Colonic mucosa (tissue), 4 donors: ENCODE measurements at regions of chr15 and their contacts with region 1.

Region 1: GRCh38 chr15:88610701-88611231 is 10.4 kb upstream of the AEN start:
- DNase-seq: no peak
- H3K4me3 ChIP-seq: no peak overlapping the region
- H3K27ac ChIP-seq: no peak overlapping the region
- H3K4me1 ChIP-seq: no peaks in the 10 kb centered on the region
- H3K27me3 ChIP-seq: peaks cover 19% of the 10 kb centered on the region
- CTCF ChIP-seq: no peak

Region 2: GRCh38 chr15:88467073-88467934 is 143.5 kb before region 1 on chr15 and contains the starts of genes MRPL46 and MRPS11:
- intact Hi-C with region 1: loop called (anchors 5 kb)
- DNase-seq: peak; percentile 96
- H3K4me3 ChIP-seq: peak within 1 kb of the TSS; percentile 91
- H3K27ac ChIP-seq: peak within 1 kb of the TSS; percentile 72
- H3K4me1 ChIP-seq: peaks cover 7% of the 10 kb centered on the region
- H3K27me3 ChIP-seq: no peaks in the 10 kb centered on the region
- CTCF ChIP-seq: no peak
- total RNA-seq, gene MRPL46: 20.6 to 40.6 TPM
- total RNA-seq, gene MRPS11: 45.7 to 73.6 TPM

Region 3: DNA sequence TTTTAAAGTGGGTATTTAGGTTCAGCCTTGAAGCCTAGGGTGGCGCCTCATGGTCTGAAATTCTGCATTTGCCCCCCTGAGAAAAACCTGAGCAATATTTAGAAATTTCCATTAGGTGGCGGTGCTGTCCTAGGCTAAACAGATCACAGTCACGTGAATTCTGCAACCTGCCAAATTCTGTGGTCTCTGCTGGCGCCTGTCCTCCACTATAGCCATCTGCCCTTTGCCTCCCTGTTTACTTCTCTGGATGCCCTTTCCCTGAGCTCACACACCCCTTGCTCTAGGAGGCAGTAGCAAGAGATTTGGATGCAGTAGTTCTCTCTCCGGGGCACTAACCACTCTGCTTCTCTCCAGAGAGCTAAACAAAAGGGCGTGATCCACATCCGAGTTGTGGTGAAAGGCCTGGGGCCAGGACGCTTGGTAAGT is 134.1 kb before region 1 on chr15:
- intact Hi-C with region 1: loop called (anchors 5 kb)
- DNase-seq: peak; percentile 23
- H3K4me3 ChIP-seq: no peak overlapping the region
- H3K27ac ChIP-seq: no peak overlapping the region
- H3K4me1 ChIP-seq: no peaks in the 10 kb centered on the region
- H3K27me3 ChIP-seq: no peaks in the 10 kb centered on the region
- CTCF ChIP-seq: peak; percentile 33

Region 4: DNA sequence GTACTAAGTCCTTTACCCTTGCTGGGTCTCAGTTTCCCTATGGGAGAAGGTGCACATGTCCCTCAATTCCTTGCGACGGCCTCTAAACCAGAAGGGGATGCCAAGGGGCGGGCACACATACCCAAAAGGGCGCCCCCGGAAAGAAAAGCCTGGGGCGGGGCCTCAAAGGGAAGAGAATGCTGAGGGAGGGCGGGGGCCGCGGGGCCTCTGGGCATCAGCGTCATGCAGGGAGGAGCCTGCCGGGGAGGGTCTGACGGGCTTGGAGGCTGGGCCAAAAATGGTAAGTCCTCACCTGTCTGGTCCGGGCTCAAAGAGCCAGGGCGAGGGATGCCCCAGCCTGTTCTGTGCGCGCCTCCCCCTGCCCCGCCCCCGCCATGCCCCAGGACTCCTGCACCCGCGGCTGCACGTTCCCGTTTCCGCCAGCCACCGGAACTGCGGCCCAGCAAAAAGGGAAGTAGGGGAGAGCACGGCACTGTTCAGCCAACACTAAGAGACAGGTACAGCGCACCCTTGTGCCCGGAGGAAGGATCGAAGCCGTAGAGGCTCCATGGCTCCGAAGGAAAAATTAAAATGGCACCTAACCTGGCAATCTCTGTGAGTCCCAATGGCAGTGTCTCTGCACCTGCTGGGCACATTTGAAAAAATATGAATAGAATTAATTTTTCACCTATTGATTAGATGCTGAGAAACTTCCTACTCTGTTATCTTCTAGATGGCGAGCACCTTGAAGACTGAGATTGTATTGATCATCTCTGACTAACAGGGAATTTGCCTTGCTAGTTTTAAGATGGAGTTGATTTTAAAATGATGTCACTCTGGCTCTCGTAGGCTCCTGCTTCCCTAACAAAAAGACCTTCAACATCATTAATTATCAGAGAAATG is 64.3 kb before region 1 on chr15 and contains the start of gene DET1:
- intact Hi-C with region 1: no loop called
- DNase-seq: peak; percentile 96
- H3K4me3 ChIP-seq: peak within 1 kb of the TSS; percentile 65
- H3K27ac ChIP-seq: peak within 1 kb of the TSS; percentile 88
- H3K4me1 ChIP-seq: no peaks in the 10 kb centered on the region
- H3K27me3 ChIP-seq: no peaks in the 10 kb centered on the region
- CTCF ChIP-seq: peak; percentile 68
- total RNA-seq, gene DET1: 4.6 to 4.9 TPM